ENCODE measurements at regions of chr19 and their contacts with region 1.

Region 1: GRCh38 chr19:13190781-13191540 is 40.8 kb downstream of the IER2 start:
- DNase-seq: no peak
- H3K4me3 ChIP-seq: no peak overlapping the region
- H3K27ac ChIP-seq: no peak overlapping the region
- H3K4me1 ChIP-seq: no peaks in the 10 kb centered on the region
- H3K27me3 ChIP-seq: no peaks in the 10 kb centered on the region
- CTCF ChIP-seq: no peak
- POLR2A ChIP-seq: no peak

Region 2: DNA sequence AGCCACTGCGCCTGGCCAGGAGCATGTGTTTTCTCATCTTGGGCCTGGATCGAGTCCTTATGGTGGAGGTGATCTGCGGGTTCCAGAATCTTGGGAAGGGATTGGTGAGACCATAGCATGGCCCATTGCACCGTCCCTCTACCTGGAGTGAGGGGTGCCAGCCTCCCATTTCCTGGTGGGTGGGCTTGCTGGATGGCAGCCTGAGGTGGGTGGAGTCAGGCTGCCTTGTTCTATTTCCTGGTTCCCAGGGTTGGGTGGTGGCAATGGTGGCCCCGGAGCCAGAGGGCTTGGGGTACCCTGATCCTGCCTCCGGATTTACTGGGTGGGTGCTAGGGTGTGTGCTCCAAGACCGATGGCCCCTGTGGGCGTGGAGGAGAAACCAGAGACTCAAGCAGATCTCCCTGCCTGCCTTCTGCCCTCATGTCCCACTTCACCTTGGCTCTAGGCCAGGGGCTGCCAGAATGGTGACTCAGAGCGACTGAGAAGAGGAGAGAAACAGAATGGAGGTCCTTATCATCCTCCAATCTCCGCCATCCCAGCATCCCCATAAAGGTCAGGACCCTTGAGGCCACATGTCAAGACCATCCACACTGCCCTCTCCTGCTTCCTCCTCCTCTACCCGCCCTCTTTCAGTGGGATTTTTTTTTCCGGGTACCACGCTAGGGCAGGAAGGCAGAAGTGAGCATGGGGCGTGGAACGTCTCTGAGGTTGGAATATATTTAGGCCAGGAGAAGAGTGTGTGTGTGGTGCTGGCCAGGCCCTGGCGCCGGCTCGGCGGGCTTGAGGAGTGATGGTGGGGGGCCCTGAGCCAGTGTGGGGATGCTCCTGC is 18.7 kb before region 1 on chr19:
- intact Hi-C with region 1: no loop called
- DNase-seq: peak; percentile 79 to 87
- H3K4me3 ChIP-seq: no peak overlapping the region
- H3K27ac ChIP-seq: peak overlapping the region; percentile 68 to 87
- H3K4me1 ChIP-seq: peaks cover 0 to 6% of the 10 kb centered on the region in 2 donors
- H3K27me3 ChIP-seq: no peaks in the 10 kb centered on the region
- CTCF ChIP-seq: no peak
- POLR2A ChIP-seq: no peak

Region 3: GRCh38 chr19:15038297-15038696 is 1847.3 kb after region 1 on chr19:
- intact Hi-C with region 1: loop called (anchors 5 kb)
- DNase-seq: peak in 1 of 2 donors; percentile 84
- H3K4me3 ChIP-seq: no peak overlapping the region
- H3K27ac ChIP-seq: peak overlapping the region; percentile 1 to 64
- H3K4me1 ChIP-seq: no peaks in the 10 kb centered on the region
- H3K27me3 ChIP-seq: no peaks in the 10 kb centered on the region
- CTCF ChIP-seq: no peak
- POLR2A ChIP-seq: no peak

Measured in breast epithelium (tissue), 4 donors.